SK-N-SH (cell line): ENCODE measurements at regions of chr19 and their contacts with region 1.

Region 1: GRCh38 chr19:18203863-18204393 is at the start of gene RAB3A:
- DNase-seq: peak; percentile 96
- H3K4me3 ChIP-seq: peak within 1 kb of the TSS; percentile 71 to 82
- H3K27ac ChIP-seq: peak within 1 kb of the TSS; percentile 85 to 93
- H3K4me1 ChIP-seq: peaks cover 4 to 20% of the 10 kb centered on the region in 2 experiments; a peak in 2 of 4 replicates
- H3K27me3 ChIP-seq: no peaks in the 10 kb centered on the region
- CTCF ChIP-seq: no peak
- EP300 ChIP-seq: no peak
- RAD21 ChIP-seq: no peak
- polyA plus RNA-seq, gene RAB3A: 9.1 and 9.7 TPM in 2 replicates

Region 2: GRCh38 chr19:18192673-18193387 is 11.1 kb before region 1 on chr19 and contains the start of gene MPV17L2:
- CTCF ChIA-PET with region 1: interaction called, 23 read pairs
- POLR2A ChIA-PET with region 1: interaction called, 5 read pairs
- DNase-seq: peak; percentile 93
- H3K4me3 ChIP-seq: peak within 1 kb of the TSS; percentile 72 to 94
- H3K27ac ChIP-seq: peak within 1 kb of the TSS; percentile 82 to 84
- H3K4me1 ChIP-seq: peaks cover 9 to 26% of the 10 kb centered on the region in 2 experiments; a peak in 2 of 4 replicates
- H3K27me3 ChIP-seq: no peaks in the 10 kb centered on the region
- CTCF ChIP-seq: no peak
- EP300 ChIP-seq: peak in 1 of 2 experiments; percentile 48; a peak in 1 of 4 replicates
- RAD21 ChIP-seq: no peak
- polyA plus RNA-seq, gene MPV17L2: 17.5 and 20.6 TPM in 2 replicates

Region 3: DNA sequence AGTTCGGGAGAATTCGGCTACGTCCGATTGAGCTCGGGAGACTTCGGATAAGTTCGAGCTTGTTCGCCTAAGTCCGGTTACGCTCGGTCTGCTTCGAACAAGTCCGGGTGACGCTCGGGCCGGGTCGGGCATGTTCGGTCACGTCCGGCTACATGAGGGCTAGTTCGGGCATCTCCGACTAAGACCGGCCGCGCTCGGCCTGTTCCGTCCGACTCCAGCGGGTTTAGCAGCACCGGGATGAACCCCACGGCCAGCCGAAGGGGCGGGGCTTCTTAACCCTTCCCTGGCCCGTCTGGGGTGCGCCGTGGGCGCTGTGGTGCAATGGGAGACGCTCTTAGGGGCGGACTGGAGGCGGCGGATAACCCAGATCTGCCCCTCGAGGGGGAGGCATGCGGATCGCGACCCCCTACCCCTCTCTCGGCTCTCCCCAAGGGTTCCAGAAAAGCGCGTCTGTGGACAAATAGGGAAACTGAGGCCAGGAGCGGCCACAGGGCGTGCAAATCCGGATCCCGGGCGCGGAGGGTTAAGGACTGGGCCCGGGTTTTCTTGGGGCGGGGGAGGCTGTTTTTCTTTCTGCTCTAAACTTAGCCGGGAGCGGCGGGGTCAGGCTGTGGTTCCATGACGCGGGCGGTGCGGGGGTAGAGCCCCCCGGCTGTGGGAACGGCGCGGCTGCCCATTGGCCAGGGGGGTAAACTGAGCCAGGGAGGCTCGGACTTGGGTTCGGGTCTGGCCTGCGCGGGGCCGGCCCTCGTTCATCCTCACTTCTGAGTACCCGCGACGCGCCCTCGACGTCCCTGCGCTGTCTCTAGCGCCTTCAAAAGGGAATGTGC is 20.8 kb after region 1 on chr19:
- CTCF ChIA-PET with region 1: interaction called, 64 read pairs
- POLR2A ChIA-PET with region 1: no interaction called
- DNase-seq: peak; percentile 99
- H3K4me3 ChIP-seq: peak overlapping the region; percentile 55 to 59
- H3K27ac ChIP-seq: peak overlapping the region in 1 of 2 experiments; percentile 62; a peak in 1 of 4 replicates
- H3K4me1 ChIP-seq: peaks cover 0 to 19% of the 10 kb centered on the region in 2 experiments; a peak in 1 of 4 replicates
- H3K27me3 ChIP-seq: no peaks in the 10 kb centered on the region
- CTCF ChIP-seq: no peak
- EP300 ChIP-seq: no peak
- RAD21 ChIP-seq: no peak

Region 4: DNA sequence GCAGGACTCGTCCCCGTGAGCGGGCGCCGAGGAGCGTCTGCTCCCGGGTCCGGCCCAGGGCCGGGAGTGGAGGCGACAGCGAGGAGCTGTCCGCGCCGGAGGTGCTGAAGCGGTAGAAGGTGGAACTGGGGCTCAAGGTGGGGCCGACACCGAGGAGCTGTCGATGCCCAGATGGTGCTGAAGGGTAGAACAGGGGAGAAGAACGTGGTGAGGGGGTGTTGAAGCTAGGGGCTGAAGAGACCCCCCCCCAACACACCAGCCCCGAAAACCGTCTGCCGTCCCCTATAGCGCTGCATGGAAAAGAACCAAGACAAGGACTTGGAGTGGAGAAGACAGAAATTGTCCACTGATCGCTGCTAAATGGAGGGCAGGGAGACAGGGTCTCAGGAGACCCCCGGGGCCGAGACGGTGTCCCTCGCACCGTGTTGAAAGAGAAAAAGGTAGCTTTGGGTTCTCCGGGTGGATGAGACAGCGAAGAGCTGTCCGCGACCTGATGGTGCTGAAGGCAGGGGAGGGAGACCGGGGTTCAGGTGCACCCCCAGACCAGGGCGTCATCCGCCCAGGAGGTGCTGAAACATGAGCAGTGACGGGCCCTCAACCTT is 29.4 kb after region 1 on chr19:
- CTCF ChIA-PET with region 1: interaction called, 54 read pairs
- POLR2A ChIA-PET with region 1: no interaction called
- DNase-seq: peak; percentile 83
- H3K4me3 ChIP-seq: peak overlapping the region; percentile 35 to 42; a peak in 3 of 4 replicates
- H3K27ac ChIP-seq: no peak overlapping the region; a peak in 1 of 4 replicates
- H3K4me1 ChIP-seq: peaks cover 0 to 11% of the 10 kb centered on the region in 2 experiments; a peak in 1 of 4 replicates
- H3K27me3 ChIP-seq: no peaks in the 10 kb centered on the region
- CTCF ChIP-seq: no peak
- EP300 ChIP-seq: no peak
- RAD21 ChIP-seq: no peak

Region 5: DNA sequence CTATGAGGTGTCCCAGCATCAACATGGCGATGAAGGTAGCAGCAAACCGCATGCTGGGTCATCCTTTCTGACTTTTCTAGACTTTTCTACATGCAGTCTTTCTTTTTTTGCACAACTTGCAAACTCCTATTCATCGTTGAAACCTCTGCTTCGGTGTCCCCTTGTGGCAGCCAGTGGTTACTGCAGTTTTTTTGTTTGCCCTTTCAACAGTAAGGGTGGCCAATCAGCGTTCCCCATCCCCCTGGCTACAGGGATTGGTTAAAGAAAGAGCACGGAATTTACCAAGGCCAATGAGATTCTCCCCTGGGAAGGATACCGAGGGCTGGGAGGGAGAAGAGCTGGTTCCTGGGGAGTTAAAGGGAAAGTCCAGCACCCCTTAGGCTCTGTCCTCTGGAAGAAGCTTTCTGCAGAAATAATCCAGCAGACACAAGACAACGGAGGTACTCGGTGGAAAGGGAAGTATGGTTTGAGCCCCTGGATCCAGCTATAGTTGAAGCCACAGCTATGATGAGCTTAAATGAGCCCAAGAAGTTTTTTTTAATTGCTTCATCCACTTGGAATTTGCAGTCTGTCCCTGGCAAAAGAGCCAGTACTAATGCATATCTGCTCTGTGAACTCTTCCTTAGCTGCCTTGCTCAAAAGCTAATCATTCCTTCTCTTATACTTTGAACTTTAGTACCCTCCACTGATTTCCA is 124.6 kb after region 1 on chr19:
- CTCF ChIA-PET with region 1: interaction called, 13 read pairs
- POLR2A ChIA-PET with region 1: no interaction called
- DNase-seq: peak; percentile 94
- H3K4me3 ChIP-seq: peak overlapping the region; percentile 39 to 52
- H3K27ac ChIP-seq: peak overlapping the region; percentile 63 to 84
- H3K4me1 ChIP-seq: peaks cover 10 to 14% of the 10 kb centered on the region in 2 experiments; a peak in 2 of 4 replicates
- H3K27me3 ChIP-seq: no peaks in the 10 kb centered on the region
- CTCF ChIP-seq: peak; percentile 93
- EP300 ChIP-seq: peak in 1 of 2 experiments; percentile 53; a peak in 2 of 4 replicates
- RAD21 ChIP-seq: peak; percentile 90